GM12878 (cell line): ENCODE measurements at regions of chr20 and their contacts with region 1.

Region 1: GRCh38 chr20:63785691-63786131 is 45.4 kb downstream of the ZBTB46 start:
- DNase-seq: no peak
- ATAC-seq: no peak
- H3K4me3 ChIP-seq: no peak overlapping the region
- H3K27ac ChIP-seq: no peak overlapping the region
- H3K4me1 ChIP-seq: peaks cover 8% of the 10 kb centered on the region
- H3K27me3 ChIP-seq: no peaks in the 10 kb centered on the region
- CTCF ChIP-seq: no peak
- EP300 ChIP-seq: no peak
- POLR2A ChIP-seq: no peak
- RAD21 ChIP-seq: no peak

Region 2: GRCh38 chr20:63698739-63699465 is 86.8 kb before region 1 on chr20:
- CTCF ChIA-PET with region 1: no interaction called
- POLR2A ChIA-PET with region 1: no interaction called
- RAD21 ChIA-PET with region 1: no interaction called
- SMC1A ChIA-PET with region 1: no interaction called
- in situ Hi-C with region 1: no loop called
- intact Hi-C with region 1: loop called (anchors 2 kb)
- DNase-seq: peak; percentile 30
- ATAC-seq: peak; percentile 78
- H3K4me3 ChIP-seq: no peak overlapping the region
- H3K27ac ChIP-seq: peak overlapping the region; percentile 75
- H3K4me1 ChIP-seq: peaks cover 16% of the 10 kb centered on the region
- H3K27me3 ChIP-seq: no peaks in the 10 kb centered on the region
- CTCF ChIP-seq: no peak
- EP300 ChIP-seq: 0 out of 4 replicates have a peak, but pooled peaks of 1 of the 2 experiments have one; percentile 21
- POLR2A ChIP-seq: peak; percentile 52
- RAD21 ChIP-seq: no peak